Tibial artery (tissue), 4 donors: ENCODE measurements at regions of chr19 and their contacts with region 1.

Region 1: DNA sequence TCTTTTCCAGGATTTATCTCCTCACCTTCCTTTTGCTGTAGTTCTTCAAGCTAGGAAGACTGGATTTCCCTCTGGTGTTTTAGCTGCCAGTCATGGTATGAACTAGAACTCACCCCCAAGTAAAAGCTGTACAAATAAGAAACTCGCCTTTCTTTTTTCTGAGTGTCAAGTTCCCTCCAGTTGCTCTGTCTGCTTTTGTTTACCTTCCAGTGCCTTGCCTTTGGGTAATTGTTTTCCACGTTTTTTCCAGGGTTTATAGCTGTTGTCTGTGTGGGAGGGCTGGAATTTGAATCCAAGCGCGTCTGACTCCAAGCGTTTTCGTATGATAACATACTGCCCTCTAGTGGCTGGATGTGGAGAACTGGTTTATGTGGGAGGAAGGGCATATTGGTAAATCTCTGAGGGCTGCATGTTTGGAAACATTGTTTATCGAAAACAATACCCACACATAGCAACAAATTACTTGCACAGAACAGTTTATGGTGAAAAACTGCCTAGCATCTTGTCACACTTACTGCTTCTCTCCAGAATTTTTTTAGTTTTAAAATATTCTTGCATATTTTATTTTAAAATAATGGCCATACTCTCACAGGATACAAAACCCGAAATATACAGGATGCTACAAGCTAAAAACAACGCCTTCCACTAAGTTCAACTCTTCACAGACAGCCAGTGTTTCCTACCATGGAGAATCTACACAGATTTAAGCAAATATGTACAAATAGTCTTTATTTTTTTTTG is 19.2 kb downstream of the RCN3 start:
- DNase-seq: peak; percentile 76 to 82
- H3K4me3 ChIP-seq: no peak overlapping the region
- H3K27ac ChIP-seq: no peak overlapping the region
- H3K4me1 ChIP-seq: peaks cover 0 to 4% (median 0%) of the 10 kb centered on the region in 4 donors
- H3K27me3 ChIP-seq: no peaks in the 10 kb centered on the region
- CTCF ChIP-seq: peak; percentile 75 to 92

Region 2: DNA sequence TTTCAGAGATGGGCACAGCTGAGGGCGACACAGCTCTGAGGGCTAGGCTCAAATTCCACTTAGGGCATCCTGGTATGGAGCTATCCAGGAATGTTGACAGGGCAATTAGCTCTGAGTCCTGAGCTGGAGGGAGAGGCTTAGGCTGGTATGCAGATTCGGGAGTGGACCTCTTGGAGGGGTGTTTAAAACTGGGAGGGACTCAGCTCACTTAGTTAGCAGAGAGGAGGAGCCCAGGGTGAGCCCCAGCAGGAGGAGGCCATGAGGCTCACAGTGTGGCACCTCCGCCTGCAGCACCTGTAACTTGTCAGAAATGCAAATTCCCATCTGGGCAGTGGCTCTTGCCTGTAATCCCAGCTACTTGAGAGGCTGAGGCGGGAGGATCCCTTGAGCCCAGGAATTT is 1811.9 kb before region 1 on chr19:
- intact Hi-C with region 1: loop called (anchors 5 kb)
- DNase-seq: no peak
- H3K4me3 ChIP-seq: no peak overlapping the region
- H3K27ac ChIP-seq: peak overlapping the region; percentile 12 to 36
- H3K4me1 ChIP-seq: peaks cover 0 to 19% (median 5%) of the 10 kb centered on the region in 4 donors
- H3K27me3 ChIP-seq: no peaks in the 10 kb centered on the region
- CTCF ChIP-seq: no peak

Region 3: GRCh38 chr19:49473868-49474544 is 73.0 kb before region 1 on chr19 and contains the start of gene FLT3LG:
- intact Hi-C with region 1: loop called (anchors 2 kb)
- DNase-seq: peak; percentile 74 to 90
- H3K4me3 ChIP-seq: peak within 1 kb of the TSS; percentile 61 to 73
- H3K27ac ChIP-seq: peak within 1 kb of the TSS; percentile 69 to 80
- H3K4me1 ChIP-seq: peaks cover 0 to 22% (median 12%) of the 10 kb centered on the region in 4 donors
- H3K27me3 ChIP-seq: no peaks in the 10 kb centered on the region
- CTCF ChIP-seq: peak; percentile 97 to 99

Region 4: GRCh38 chr19:49502866-49503581 is 44.0 kb before region 1 on chr19:
- intact Hi-C with region 1: loop called (anchors 2 kb)
- DNase-seq: peak in 1 of 2 donors; percentile 39
- H3K4me3 ChIP-seq: no peak overlapping the region
- H3K27ac ChIP-seq: no peak overlapping the region
- H3K4me1 ChIP-seq: peaks cover 0 to 28% (median 16%) of the 10 kb centered on the region in 4 donors
- H3K27me3 ChIP-seq: no peaks in the 10 kb centered on the region
- CTCF ChIP-seq: peak; percentile 52 to 67